ENCODE measurements at regions of chr19 and their contacts with region 1.

Region 1: DNA sequence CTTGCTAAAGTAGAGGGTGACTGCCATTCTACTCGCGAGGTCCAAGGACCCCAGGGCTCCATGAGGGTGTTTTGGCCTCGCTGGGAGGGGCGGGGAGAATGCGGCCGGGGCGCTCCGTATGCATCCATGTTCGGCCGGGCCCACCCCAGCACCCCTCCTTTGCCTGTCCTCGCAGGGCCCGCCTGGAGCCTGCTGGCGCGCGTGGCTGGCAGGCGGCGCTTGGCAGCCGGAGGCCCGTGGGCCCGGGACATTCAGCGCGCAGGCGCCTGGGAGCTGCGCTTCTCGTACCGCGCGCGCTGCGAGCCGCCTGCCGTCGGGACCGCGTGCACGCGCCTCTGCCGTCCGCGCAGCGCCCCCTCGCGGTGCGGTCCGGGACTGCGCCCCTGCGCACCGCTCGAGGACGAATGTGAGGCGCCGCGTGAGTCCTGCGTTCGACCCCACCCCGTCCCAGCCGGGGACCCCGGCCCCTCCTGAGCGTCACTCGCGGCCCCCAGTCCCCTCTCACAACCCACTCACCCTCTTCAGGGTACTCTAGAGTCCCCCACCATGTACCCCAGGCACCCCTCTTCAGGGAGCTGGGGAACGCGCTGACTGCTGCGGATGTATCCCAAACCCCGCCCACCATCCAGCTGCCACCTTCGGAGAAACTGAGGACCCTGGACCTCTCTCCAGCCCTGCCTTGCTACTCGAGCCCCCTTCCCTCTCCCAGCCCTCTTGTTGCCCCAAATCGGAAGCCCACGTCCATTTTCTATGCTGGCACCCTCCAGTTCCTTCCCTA is 4.1 kb downstream of the DLL3 start:
- DNase-seq: peak; percentile 80
- ATAC-seq: peak; percentile 8
- H3K4me3 Mint-ChIP-seq: no peak overlapping the region
- H3K27ac Mint-ChIP-seq: no peak overlapping the region
- H3K4me1 Mint-ChIP-seq: peaks cover 17% of the 10 kb centered on the region
- H3K27me3 Mint-ChIP-seq: peaks cover 95% of the 10 kb centered on the region
- CTCF ChIP-seq: peak; percentile 100

Region 2: DNA sequence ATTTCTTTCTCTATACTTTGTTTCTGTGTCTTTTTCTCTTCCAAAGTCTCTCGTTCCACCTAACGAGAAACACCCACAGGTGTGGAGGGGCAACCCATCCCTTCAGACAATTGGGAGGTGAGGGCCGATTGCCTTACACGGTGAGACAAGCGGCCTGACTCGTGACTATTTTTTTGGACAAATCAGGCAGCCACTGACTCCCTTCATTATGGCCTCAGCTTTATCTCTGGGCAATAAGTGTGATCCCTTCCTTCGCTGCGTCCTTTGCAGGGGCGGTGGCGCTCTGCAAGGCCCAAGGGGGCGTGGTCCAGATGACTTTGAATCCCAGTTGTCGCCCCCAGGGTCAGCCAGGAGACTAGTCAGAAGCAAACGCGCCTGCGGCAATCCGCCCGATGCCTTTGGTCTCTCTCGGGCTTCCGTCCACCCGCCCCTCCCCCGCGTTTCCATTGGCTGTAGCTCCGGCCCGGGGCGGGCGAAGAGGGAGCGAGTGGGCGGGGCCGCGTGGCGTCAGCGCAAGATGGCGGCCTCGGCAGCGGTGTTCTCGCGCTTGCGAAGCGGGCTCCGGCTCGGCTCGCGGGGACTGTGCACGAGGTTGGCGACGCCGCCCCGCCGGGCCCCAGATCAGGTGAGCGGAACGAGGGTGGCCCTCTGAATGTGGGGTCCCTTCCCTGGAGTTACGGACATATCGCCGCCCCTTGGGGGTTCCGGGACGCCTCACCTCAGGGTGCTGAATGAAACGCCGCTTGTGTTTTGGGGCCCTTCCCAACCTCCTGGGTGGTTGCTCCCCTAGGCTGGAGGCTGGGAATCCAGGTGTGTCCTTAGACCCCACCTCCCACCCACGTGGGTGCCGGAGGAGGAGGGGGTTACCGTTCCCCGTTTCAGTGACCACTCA is 22.2 kb before region 1 on chr19 and contains the start of gene TIMM50:
- CTCF ChIA-PET with region 1: interaction called, 56 read pairs
- POLR2A ChIA-PET with region 1: interaction called, 6 read pairs
- DNase-seq: peak; percentile 100
- ATAC-seq: peak; percentile 96
- H3K4me3 Mint-ChIP-seq: peak within 1 kb of the TSS; percentile 91
- H3K27ac Mint-ChIP-seq: peak within 1 kb of the TSS; percentile 99
- H3K4me1 Mint-ChIP-seq: peaks cover 18% of the 10 kb centered on the region
- H3K27me3 Mint-ChIP-seq: no peaks in the 10 kb centered on the region
- CTCF ChIP-seq: no peak
- total RNA-seq, gene TIMM50: 136 to 154 TPM (median 137 TPM) in 3 replicates

Region 3: GRCh38 chr19:39514840-39515550 is 12.2 kb after region 1 on chr19 and contains the start of gene SELENOV:
- CTCF ChIA-PET with region 1: interaction called, 18 read pairs
- POLR2A ChIA-PET with region 1: interaction called, 4 read pairs
- DNase-seq: peak; percentile 90
- ATAC-seq: peak; percentile 76
- H3K4me3 Mint-ChIP-seq: peak within 1 kb of the TSS; percentile 89
- H3K27ac Mint-ChIP-seq: peak within 1 kb of the TSS; percentile 41; the same call in 1 of the 2 replicates
- H3K4me1 Mint-ChIP-seq: peaks cover 27% of the 10 kb centered on the region
- H3K27me3 Mint-ChIP-seq: peaks cover 36% of the 10 kb centered on the region
- CTCF ChIP-seq: no peak
- total RNA-seq, gene SELENOV: 12.6 to 15.4 TPM (median 15.1 TPM) in 3 replicates

Region 4: GRCh38 chr19:39768334-39768733 is 265.5 kb after region 1 on chr19:
- CTCF ChIA-PET with region 1: no interaction called
- POLR2A ChIA-PET with region 1: no interaction called
- DNase-seq: no peak
- ATAC-seq: no peak
- H3K4me3 Mint-ChIP-seq: no peak overlapping the region
- H3K27ac Mint-ChIP-seq: no peak overlapping the region
- H3K4me1 Mint-ChIP-seq: peaks cover 34% of the 10 kb centered on the region
- H3K27me3 Mint-ChIP-seq: peaks cover 3% of the 10 kb centered on the region; the same call in 1 of the 2 replicates
- CTCF ChIP-seq: no peak

Measured in WTC11 (cell line).